B cell (primary cell): ENCODE measurements at regions of chr2 and their contacts with region 1.

Region 1: DNA sequence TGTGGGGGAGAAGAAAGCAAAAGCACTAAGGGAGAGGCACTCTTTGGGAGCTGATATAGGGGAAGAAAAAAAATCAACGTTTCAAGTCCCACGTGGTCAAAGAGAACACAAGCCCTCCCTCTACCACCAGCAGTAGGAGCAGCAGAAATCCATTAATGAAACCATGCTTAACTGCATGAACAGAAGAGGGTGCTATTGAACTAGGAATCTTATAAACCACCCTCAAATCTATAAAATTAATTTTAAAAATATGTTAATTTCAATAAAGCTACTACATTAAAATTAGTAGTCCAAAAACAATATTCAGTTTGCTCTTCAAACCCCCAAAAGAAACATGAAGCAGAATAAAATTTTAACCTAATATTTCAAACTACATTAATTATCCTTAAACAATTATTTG is 147.8 kb downstream of the TMEM18 start:
- DNase-seq: peak; percentile 40
- ATAC-seq: peak; percentile 73
- H3K4me3 ChIP-seq: no peak overlapping the region
- H3K4me3 Mint-ChIP-seq: no peak overlapping the region
- H3K27ac ChIP-seq: no peak overlapping the region
- H3K27ac Mint-ChIP-seq: no peak overlapping the region
- H3K4me1 ChIP-seq: no peaks in the 10 kb centered on the region
- H3K4me1 Mint-ChIP-seq: no peaks in the 10 kb centered on the region
- H3K27me3 ChIP-seq: no peaks in the 10 kb centered on the region
- H3K27me3 Mint-ChIP-seq: peaks cover 7% of the 10 kb centered on the region
- CTCF ChIP-seq: peak; percentile 73

Region 2: GRCh38 chr2:636641-637405 is 107.4 kb after region 1 on chr2:
- CTCF ChIA-PET with region 1: interaction called, 105 read pairs
- POLR2A ChIA-PET with region 1: no interaction called
- intact Hi-C with region 1: loop called (anchors 1 kb)
- DNase-seq: peak; percentile 72
- ATAC-seq: peak; percentile 70
- H3K4me3 ChIP-seq: peak overlapping the region in 4 of 5 experiments; percentile 49 to 65 (median 56)
- H3K4me3 Mint-ChIP-seq: peak overlapping the region; percentile 92
- H3K27ac ChIP-seq: peak overlapping the region in 1 of 2 donors; percentile 43
- H3K27ac Mint-ChIP-seq: peak overlapping the region; percentile 80
- H3K4me1 ChIP-seq: peaks cover 7 to 8% of the 10 kb centered on the region in 2 donors
- H3K4me1 Mint-ChIP-seq: peaks cover 6% of the 10 kb centered on the region
- H3K27me3 ChIP-seq: peaks cover 0 to 10% (median 0%) of the 10 kb centered on the region in 4 experiments
- H3K27me3 Mint-ChIP-seq: peaks cover 13% of the 10 kb centered on the region
- CTCF ChIP-seq: peak; percentile 99

Region 3: GRCh38 chr2:655626-656025 is 126.2 kb after region 1 on chr2:
- CTCF ChIA-PET with region 1: no interaction called
- POLR2A ChIA-PET with region 1: no interaction called
- intact Hi-C with region 1: no loop called
- DNase-seq: no peak
- ATAC-seq: no peak
- H3K4me3 ChIP-seq: no peak overlapping the region
- H3K4me3 Mint-ChIP-seq: no peak overlapping the region
- H3K27ac ChIP-seq: no peak overlapping the region
- H3K27ac Mint-ChIP-seq: no peak overlapping the region
- H3K4me1 ChIP-seq: no peaks in the 10 kb centered on the region
- H3K4me1 Mint-ChIP-seq: no peaks in the 10 kb centered on the region
- H3K27me3 ChIP-seq: peaks cover 0 to 3% (median 0%) of the 10 kb centered on the region in 4 experiments
- H3K27me3 Mint-ChIP-seq: peaks cover 3% of the 10 kb centered on the region
- CTCF ChIP-seq: no peak

Region 4: GRCh38 chr2:1550658-1551316 is 1021.4 kb after region 1 on chr2:
- CTCF ChIA-PET with region 1: interaction called, 18 read pairs
- POLR2A ChIA-PET with region 1: no interaction called
- intact Hi-C with region 1: no loop called
- DNase-seq: peak; percentile 70
- ATAC-seq: peak; percentile 69
- H3K4me3 ChIP-seq: no peak overlapping the region
- H3K4me3 Mint-ChIP-seq: no peak overlapping the region
- H3K27ac ChIP-seq: no peak overlapping the region
- H3K27ac Mint-ChIP-seq: no peak overlapping the region
- H3K4me1 ChIP-seq: peaks cover 9 to 12% of the 10 kb centered on the region in 2 donors
- H3K4me1 Mint-ChIP-seq: peaks cover 6% of the 10 kb centered on the region
- H3K27me3 ChIP-seq: peaks cover 0 to 15% (median 4%) of the 10 kb centered on the region in 4 experiments
- H3K27me3 Mint-ChIP-seq: peaks cover 32% of the 10 kb centered on the region
- CTCF ChIP-seq: peak; percentile 97

Region 5: GRCh38 chr2:1817256-1818051 is 1288.0 kb after region 1 on chr2:
- CTCF ChIA-PET with region 1: no interaction called
- POLR2A ChIA-PET with region 1: no interaction called
- intact Hi-C with region 1: loop called (anchors 5 kb)
- DNase-seq: peak; percentile 57
- ATAC-seq: peak; percentile 66
- H3K4me3 ChIP-seq: no peak overlapping the region
- H3K4me3 Mint-ChIP-seq: no peak overlapping the region
- H3K27ac ChIP-seq: no peak overlapping the region
- H3K27ac Mint-ChIP-seq: no peak overlapping the region
- H3K4me1 ChIP-seq: no peaks in the 10 kb centered on the region
- H3K4me1 Mint-ChIP-seq: peaks cover 2% of the 10 kb centered on the region
- H3K27me3 ChIP-seq: peaks cover 0 to 5% (median 0%) of the 10 kb centered on the region in 4 experiments
- H3K27me3 Mint-ChIP-seq: peaks cover 6% of the 10 kb centered on the region
- CTCF ChIP-seq: peak; percentile 98